ENCODE measurements at regions of chr13 and their contacts with region 1.

Region 1: DNA sequence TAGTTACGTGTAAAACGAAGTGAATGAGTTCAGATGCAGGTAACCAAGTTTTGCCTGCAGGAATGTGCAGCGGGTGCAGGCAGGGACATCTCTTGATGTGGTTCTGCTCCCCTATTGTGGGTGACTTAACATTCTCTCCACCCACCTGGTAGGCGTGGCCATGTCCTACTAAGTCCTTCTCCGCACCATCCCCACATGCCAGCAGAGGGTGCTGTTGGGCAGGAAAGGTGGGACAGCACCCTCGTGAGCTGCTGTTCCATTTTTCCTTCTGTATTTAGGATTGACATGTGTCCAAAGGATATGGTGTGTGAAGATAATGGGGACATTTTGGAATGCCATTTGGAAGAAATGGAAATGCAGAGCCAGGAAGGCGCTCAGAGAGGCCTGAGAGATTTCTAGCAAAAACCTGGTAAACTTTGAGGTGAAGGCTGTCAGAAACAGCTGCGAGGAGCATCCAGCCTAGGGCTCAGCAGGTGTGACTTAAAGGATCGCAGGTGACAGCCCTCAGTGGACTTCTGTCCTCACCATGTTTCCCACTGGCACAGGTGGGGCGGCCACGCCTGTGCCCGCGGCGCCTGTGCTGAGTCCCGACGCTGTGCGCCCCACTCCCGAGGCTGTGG is 26.2 kb upstream of the MCF2L start:
- DNase-seq: peak; percentile 95 to 99
- H3K4me3 ChIP-seq: peak overlapping the region; percentile 36 to 61
- H3K27ac ChIP-seq: no peak overlapping the region
- H3K4me1 ChIP-seq: peaks cover 0 to 13% (median 12%) of the 10 kb centered on the region in 4 donors
- H3K27me3 ChIP-seq: peaks cover 0 to 38% of the 10 kb centered on the region in 2 donors
- CTCF ChIP-seq: peak; percentile 86 to 92

Region 2: DNA sequence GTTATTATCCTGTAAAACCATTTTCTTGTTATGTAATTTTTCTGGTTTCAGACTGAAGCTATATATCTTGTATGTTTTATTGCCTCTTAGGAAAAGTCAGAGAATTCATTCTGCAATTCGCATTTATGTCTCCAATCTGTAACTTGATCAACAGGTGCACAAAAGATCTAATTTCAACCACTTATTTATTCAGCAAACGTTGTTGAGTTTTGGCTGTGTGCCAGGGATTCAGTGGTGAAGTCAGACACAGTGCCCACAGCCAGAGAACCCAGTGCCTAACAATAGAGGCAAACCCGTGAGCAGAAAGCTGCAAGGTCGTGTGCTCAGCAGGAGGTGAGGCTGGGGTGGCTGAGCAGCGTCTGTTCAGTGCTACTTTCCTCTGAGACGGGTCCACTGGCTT is 93.3 kb before region 1 on chr13:
- intact Hi-C with region 1: no loop called
- DNase-seq: no peak
- H3K4me3 ChIP-seq: no peak overlapping the region
- H3K27ac ChIP-seq: no peak overlapping the region
- H3K4me1 ChIP-seq: no peaks in the 10 kb centered on the region
- H3K27me3 ChIP-seq: no peaks in the 10 kb centered on the region
- CTCF ChIP-seq: no peak

Region 3: GRCh38 chr13:113374511-113375175 is 431.8 kb after region 1 on chr13:
- intact Hi-C with region 1: loop called (anchors 10 kb)
- DNase-seq: peak in 1 of 2 donors; percentile 61
- H3K4me3 ChIP-seq: no peak overlapping the region
- H3K27ac ChIP-seq: no peak overlapping the region
- H3K4me1 ChIP-seq: no peaks in the 10 kb centered on the region
- H3K27me3 ChIP-seq: peaks cover 0 to 13% of the 10 kb centered on the region in 2 donors
- CTCF ChIP-seq: no peak